ENCODE measurements at regions of chr12 and their contacts with region 1.

Region 1: GRCh38 chr12:61524851-61525250 is 735.4 kb upstream of the USP15 start:
- DNase-seq: no peak
- H3K4me3 ChIP-seq: no peak overlapping the region
- H3K27ac ChIP-seq: no peak overlapping the region
- H3K4me1 ChIP-seq: peaks cover 0 to 10% (median 4%) of the 10 kb centered on the region in 4 experiments; a peak in 4 of 7 replicates
- H3K27me3 ChIP-seq: no peaks in the 10 kb centered on the region
- CTCF ChIP-seq: no peak
- EP300 ChIP-seq: no peak
- POLR2A ChIP-seq: no peak
- RAD21 ChIP-seq: no peak

Region 2: DNA sequence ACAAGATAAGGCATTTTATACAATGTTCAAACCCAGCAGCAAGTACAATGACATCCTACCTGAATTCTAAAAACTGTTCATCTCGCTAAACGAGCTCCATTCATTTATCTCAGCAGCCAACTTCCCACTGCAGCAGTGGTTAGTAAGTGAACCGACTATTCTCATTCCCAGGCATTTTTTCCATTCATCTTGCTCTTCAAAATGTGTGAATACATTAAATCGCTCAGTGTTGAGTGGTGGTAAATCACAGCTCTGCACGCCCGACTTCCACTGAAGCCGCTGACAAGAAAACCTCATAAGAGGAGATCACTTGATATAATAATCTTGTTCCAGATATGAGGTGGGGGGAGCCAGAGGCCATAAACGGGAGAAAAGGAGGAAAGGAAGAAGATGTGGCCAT is 10.8 kb before region 1 on chr12:
- CTCF ChIA-PET with region 1: interaction called, 12 read pairs
- POLR2A ChIA-PET with region 1: interaction called, 3 read pairs
- DNase-seq: no peak
- H3K4me3 ChIP-seq: no peak overlapping the region
- H3K27ac ChIP-seq: no peak overlapping the region
- H3K4me1 ChIP-seq: no peaks in the 10 kb centered on the region
- H3K27me3 ChIP-seq: no peaks in the 10 kb centered on the region
- CTCF ChIP-seq: no peak
- EP300 ChIP-seq: no peak
- POLR2A ChIP-seq: no peak
- RAD21 ChIP-seq: no peak

Region 3: GRCh38 chr12:61554268-61555008 is 29.6 kb after region 1 on chr12:
- CTCF ChIA-PET with region 1: no interaction called
- POLR2A ChIA-PET with region 1: no interaction called
- DNase-seq: no peak
- H3K4me3 ChIP-seq: no peak overlapping the region
- H3K27ac ChIP-seq: no peak overlapping the region
- H3K4me1 ChIP-seq: no peaks in the 10 kb centered on the region; a peak in 2 of 7 replicates
- H3K27me3 ChIP-seq: no peaks in the 10 kb centered on the region
- CTCF ChIP-seq: no peak
- EP300 ChIP-seq: no peak
- POLR2A ChIP-seq: no peak
- RAD21 ChIP-seq: no peak